Heart right ventricle (tissue), 16 donors: ENCODE measurements at regions of chr6 and their contacts with region 1.

Region 1: GRCh38 chr6:32666420-32667300 is at the start of gene HLA-DQB1:
- DNase-seq: peak in 1 of 2 donors; percentile 61
- ATAC-seq: peak; percentile 69 to 89 (median 84)
- H3K4me3 ChIP-seq: peak within 1 kb of the TSS in 7 of 10 donors; percentile 36 to 57 (median 41)
- H3K27ac ChIP-seq: peak within 1 kb of the TSS in 8 of 10 donors; percentile 19 to 82 (median 72)
- H3K4me1 ChIP-seq: peaks cover 0 to 12% (median 0%) of the 10 kb centered on the region in 9 donors
- H3K27me3 ChIP-seq: peaks cover 0 to 14% (median 0%) of the 10 kb centered on the region in 7 donors
- CTCF ChIP-seq: no peak
- total RNA-seq, gene HLA-DQB1: 6.2 to 73.7 (median 14.4) TPM

Region 2: GRCh38 chr6:32627831-32628230 is 38.8 kb before region 1 on chr6:
- intact Hi-C with region 1: loop called in 1 of 10 experiments (anchors 5 kb)
- DNase-seq: peak in 1 of 2 donors; percentile 48
- ATAC-seq: peak in 5 of 8 donors; percentile 60 to 78 (median 66)
- H3K4me3 ChIP-seq: no peak overlapping the region
- H3K27ac ChIP-seq: peak overlapping the region in 3 of 10 donors; percentile 41 to 58 (median 42)
- H3K4me1 ChIP-seq: peaks cover 0 to 11% (median 0%) of the 10 kb centered on the region in 9 donors
- H3K27me3 ChIP-seq: peaks cover 0 to 8% (median 0%) of the 10 kb centered on the region in 7 donors
- CTCF ChIP-seq: no peak

Region 3: GRCh38 chr6:32761072-32761471 is 94.4 kb after region 1 on chr6:
- intact Hi-C with region 1: loop called in 2 of 10 experiments (anchors 2 kb)
- DNase-seq: no peak
- ATAC-seq: peak in 1 of 8 donors; percentile 76
- H3K4me3 ChIP-seq: no peak overlapping the region
- H3K27ac ChIP-seq: no peak overlapping the region
- H3K4me1 ChIP-seq: no peaks in the 10 kb centered on the region
- H3K27me3 ChIP-seq: peaks cover 0 to 72% (median 41%) of the 10 kb centered on the region in 7 donors
- CTCF ChIP-seq: no peak